ENCODE measurements at regions of chr3 and their contacts with region 1.

Region 1: GRCh38 chr3:24264748-24265158 is 229.9 kb downstream of the THRB start:
- DNase-seq: no peak
- ATAC-seq: no peak
- H3K4me3 ChIP-seq: no peak overlapping the region
- H3K27ac ChIP-seq: no peak overlapping the region
- H3K4me1 ChIP-seq: no peaks in the 10 kb centered on the region
- H3K27me3 ChIP-seq: no peaks in the 10 kb centered on the region
- CTCF ChIP-seq: peak; percentile 67; the same call in 1 of the 2 replicates

Region 2: DNA sequence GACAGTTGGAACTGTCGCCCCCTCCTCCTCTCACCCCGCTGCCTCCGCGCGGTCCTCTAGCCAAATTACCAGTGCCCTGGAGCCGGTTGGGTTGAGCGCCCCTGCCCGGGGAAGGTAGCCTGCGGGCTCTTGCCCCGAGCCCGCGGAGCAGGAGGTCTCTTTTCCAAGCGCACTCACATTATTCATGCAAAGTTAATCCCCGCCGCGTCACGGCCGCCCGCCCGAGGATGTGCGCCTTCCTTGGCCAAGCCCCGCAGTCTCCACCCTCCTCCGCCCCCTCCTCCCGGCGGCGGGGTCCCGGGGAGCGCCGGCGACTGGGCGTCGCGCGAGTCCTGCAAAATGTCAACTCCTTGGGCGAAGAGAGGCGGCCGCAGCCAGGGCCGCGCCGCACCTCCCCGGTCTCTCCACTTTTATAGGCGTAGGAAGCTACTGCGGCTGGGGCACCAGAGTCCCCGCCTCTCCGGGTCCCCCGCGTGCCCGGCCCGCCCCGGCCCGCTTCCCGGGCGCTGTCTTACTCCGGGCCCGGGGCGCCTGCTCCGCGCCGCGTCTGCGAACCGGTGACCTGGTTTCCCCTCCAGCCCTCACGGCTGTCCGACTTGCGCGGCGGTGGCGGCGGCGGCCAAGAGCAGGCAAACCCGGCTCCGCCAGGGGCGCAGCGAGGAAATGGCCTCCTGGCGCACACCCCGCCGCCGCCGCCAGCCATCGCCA is 230.0 kb after region 1 on chr3 and contains the start of gene THRB:
- CTCF ChIA-PET with region 1: interaction called, 3 read pairs
- POLR2A ChIA-PET with region 1: no interaction called
- in situ Hi-C with region 1: no loop called
- intact Hi-C with region 1: loop called (anchors 5 kb)
- DNase-seq: no peak
- ATAC-seq: peak; percentile 81
- H3K4me3 ChIP-seq: peak within 1 kb of the TSS; percentile 53 to 78
- H3K27ac ChIP-seq: peak within 1 kb of the TSS; percentile 17
- H3K4me1 ChIP-seq: no peaks in the 10 kb centered on the region; the same call in none of the 2 replicates
- H3K27me3 ChIP-seq: no peaks in the 10 kb centered on the region
- CTCF ChIP-seq: peak; percentile 54
- total RNA-seq, gene THRB: 3.9 TPM